HepG2 (cell line): ENCODE measurements at regions of chr17 and their contacts with region 1.

Region 1: DNA sequence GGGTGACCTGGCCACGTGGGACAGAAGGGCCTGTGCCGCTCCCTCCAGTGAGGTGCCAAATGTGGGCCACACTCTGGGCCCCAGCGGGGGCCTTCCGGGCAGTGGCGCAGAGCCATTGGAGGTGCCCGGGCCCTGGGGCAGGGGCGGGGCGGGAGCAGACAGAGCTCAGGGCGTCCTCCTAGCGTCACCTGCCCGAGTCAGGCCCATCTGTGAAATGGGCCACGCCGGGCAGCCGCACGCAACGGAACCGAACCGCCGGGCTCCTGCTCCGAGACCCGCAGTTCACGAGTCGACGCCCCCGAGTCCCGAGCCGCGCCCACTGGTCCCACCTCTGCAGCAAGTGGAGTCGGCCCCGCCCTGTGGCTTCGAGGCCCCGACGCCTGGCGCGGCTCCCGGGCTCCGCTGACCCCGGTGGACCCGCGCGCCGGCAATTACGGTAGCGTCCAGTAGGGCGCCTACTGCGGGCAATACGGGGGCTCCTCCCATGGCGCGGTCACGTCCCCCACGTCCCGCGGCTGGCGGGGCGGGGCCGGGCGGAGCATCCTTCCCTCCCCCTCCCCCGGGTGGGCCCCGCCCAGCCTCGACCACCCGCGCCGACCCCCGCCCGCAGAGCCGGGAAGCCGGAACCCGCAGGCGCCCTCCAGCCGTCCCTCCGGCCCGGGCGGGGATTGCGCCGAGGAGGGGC is 1.9 kb downstream of the SLC16A3 start:
- DNase-seq: peak; percentile 87
- ATAC-seq: peak; percentile 53
- H3K4me3 ChIP-seq: peak overlapping the region; percentile 76 to 99 (median 97)
- H3K27ac ChIP-seq: peak overlapping the region; percentile 84
- H3K4me1 ChIP-seq: peaks cover 75% of the 10 kb centered on the region
- H3K27me3 ChIP-seq: no peaks in the 10 kb centered on the region; a peak in 1 of 5 replicates
- CTCF ChIP-seq: peak; percentile 61
- EP300 ChIP-seq: peak in 1 of 2 experiments; percentile 53; a peak in 2 of 4 replicates
- POLR2A ChIP-seq: no peak; a peak in 1 of 4 replicates
- RAD21 ChIP-seq: peak; percentile 46; the same call in 1 of the 2 replicates

Region 2: DNA sequence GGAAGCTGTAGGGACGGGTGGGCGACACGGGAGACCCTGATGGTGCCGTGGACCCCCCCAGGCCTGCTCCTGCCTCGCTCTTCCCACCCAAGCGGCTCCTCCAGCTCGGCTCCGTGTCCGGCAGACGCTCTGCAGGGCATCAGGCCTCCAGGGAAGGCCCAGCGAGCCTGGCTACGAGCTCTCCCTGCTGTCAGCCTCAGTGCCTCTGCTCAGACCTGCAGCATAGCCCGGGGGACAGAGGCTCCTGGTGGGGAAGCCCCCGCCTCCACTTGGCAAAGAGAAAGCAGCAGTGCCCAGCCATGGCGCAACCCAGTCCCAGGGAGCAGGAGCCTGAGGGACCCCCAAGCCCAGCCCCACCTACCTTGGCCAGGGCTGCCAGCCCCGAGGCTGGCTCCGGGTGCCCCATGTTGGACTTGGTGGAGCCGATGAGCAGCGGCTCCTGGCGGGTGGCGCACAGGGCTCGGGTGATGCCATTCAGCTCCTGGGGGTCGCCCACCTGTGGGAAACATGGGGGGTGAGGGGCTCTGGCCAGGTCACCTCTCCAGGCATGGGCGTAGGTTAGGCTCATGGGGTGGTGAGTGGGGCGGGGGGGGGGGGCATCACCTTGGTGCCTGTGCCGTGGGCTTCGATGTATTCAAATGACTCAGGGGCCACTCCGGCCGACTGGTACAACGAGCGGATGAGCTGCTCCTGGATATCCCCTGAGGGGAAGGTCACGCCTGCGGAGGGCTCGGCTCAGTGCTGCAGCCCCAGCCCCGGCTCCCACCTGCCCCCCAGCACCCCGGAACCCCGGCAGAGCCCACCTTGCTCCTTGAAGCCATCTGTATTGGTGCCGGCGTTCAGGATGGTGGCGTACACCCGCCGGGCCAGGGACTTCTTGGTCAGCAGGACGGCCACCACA is 138.4 kb before region 1 on chr17:
- CTCF ChIA-PET with region 1: no interaction called
- POLR2A ChIA-PET with region 1: no interaction called
- in situ Hi-C with region 1: no loop called
- intact Hi-C with region 1: no loop called
- DNase-seq: no peak
- ATAC-seq: no peak
- H3K4me3 ChIP-seq: no peak overlapping the region; a peak in 1 of 6 replicates
- H3K27ac ChIP-seq: no peak overlapping the region
- H3K4me1 ChIP-seq: peaks cover 36% of the 10 kb centered on the region
- H3K27me3 ChIP-seq: no peaks in the 10 kb centered on the region; a peak in 1 of 5 replicates
- CTCF ChIP-seq: no peak
- EP300 ChIP-seq: no peak
- POLR2A ChIP-seq: no peak; a peak in 1 of 4 replicates
- RAD21 ChIP-seq: no peak

Region 3: DNA sequence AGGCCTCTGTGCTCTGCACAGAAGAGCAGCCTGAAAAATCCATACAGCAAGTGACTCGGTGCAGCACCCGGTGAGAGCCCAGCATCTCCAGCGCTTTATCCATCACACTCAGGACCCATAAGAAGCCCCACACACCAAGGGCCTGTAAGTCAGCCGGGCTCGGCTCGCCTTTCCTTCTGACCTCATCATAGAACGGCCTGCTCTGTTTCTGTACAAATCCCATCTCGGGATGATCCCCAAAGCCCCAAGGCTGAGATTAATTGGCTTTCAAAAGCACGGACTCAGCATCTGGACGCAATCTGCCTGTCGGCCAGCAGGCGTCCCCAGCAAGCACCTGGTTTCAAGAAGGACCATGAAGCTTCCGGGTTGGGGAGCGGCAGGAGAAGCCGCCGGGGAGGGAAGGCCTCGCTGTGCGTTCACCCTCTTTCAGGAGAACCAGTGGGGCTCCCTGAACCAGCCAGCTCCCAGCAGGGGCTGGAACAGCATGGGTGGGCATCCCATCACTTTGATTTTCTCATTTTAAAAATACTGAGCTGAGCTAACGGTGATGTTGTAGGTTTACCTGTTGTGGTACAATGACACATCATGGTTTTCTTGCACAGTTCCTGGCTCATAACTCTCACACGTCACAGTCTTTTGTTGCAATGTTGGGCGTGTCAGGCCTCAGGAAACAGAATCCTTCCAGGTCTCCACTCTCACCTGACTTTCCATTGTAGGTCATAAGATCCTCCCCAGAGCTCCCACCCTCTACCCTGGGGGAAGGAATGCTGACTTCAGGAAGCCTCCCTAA is 24.9 kb before region 1 on chr17:
- CTCF ChIA-PET with region 1: interaction called, 7 read pairs
- POLR2A ChIA-PET with region 1: interaction called, 117 read pairs
- in situ Hi-C with region 1: no loop called
- intact Hi-C with region 1: no loop called
- DNase-seq: peak; percentile 84
- ATAC-seq: peak; percentile 91
- H3K4me3 ChIP-seq: peak overlapping the region in 1 of 3 experiments; percentile 33; a peak in 2 of 6 replicates
- H3K27ac ChIP-seq: peak overlapping the region; percentile 26
- H3K4me1 ChIP-seq: peaks cover 20% of the 10 kb centered on the region
- H3K27me3 ChIP-seq: no peaks in the 10 kb centered on the region
- CTCF ChIP-seq: peak; percentile 98
- EP300 ChIP-seq: no peak
- POLR2A ChIP-seq: peak; percentile 66 to 88
- RAD21 ChIP-seq: peak; percentile 89

Region 4: DNA sequence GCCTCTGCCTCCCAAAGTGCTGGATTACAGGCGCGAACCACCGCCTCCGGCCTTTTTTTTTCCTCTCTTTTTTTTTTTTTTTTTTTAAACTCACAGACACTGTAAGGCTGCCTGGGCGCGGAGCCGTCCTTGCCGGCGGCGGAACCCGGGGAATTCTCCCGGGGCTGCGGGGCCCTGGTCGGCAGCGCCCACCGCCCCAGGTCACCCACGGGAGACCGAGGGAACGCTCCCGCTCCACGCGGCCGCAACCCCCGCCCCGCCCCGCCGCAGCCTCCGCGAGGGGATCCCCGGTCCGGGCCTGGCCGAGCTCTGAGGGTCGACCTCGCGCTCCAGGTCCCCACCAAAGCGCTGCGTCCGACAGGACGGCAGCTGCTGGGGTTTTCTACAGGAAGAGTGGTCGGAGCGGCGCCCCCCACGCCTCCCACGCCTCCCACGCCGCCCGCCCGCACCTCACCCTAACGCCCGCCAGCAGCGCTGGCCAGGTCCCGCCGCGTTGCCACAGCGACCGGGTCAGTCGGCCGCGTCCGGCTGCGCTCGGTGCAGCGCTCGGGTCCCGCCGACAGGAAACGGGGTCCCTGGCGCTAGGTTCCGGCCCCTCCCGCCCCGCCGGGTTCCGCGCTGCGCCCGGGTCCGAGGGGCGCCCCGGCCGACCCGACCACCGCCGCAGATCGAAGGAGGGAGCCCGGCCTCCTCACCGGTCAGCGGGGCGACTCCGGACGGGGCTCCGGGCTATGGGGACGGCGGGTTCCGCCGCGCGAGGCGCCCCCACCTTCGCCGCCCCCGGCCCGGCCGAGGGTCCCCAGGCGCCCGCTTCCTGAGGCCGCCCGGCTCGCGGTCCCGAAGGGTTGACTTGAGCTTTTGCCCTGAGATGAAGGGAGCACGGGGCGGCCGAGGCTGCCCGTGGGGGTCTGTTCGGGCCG is 18.2 kb before region 1 on chr17 and contains the start of gene CCDC57:
- CTCF ChIA-PET with region 1: no interaction called
- POLR2A ChIA-PET with region 1: interaction called, 117 read pairs
- in situ Hi-C with region 1: no loop called
- intact Hi-C with region 1: loop called (anchors 1 kb)
- DNase-seq: peak; percentile 61
- ATAC-seq: peak; percentile 65
- H3K4me3 ChIP-seq: peak within 1 kb of the TSS; percentile 87 to 98 (median 92)
- H3K27ac ChIP-seq: peak within 1 kb of the TSS; percentile 63
- H3K4me1 ChIP-seq: peaks cover 54% of the 10 kb centered on the region
- H3K27me3 ChIP-seq: no peaks in the 10 kb centered on the region
- CTCF ChIP-seq: no peak
- EP300 ChIP-seq: peak; percentile 20 to 23; a peak in 2 of 4 replicates
- POLR2A ChIP-seq: peak in 1 of 2 experiments; percentile 53; a peak in 1 of 4 replicates
- RAD21 ChIP-seq: 0 out of 2 replicates have a peak, but pooled peaks have one; percentile 58
- total RNA-seq, gene CCDC57: 54.8 and 59.9 TPM in 2 replicates